Lower leg skin (tissue), 4 donors: ENCODE measurements at regions of chr3 and their contacts with region 1.

Region 1: GRCh38 chr3:125410922-125411321 is 35.8 kb upstream of the ZNF148 start:
- DNase-seq: no peak
- H3K4me3 ChIP-seq: no peak overlapping the region
- CTCF ChIP-seq: no peak
- POLR2A ChIP-seq: no peak

Region 2: GRCh38 chr3:124401843-124402242 is 1009.1 kb before region 1 on chr3:
- intact Hi-C with region 1: loop called (anchors 5 kb)
- DNase-seq: no peak
- H3K4me3 ChIP-seq: no peak overlapping the region
- CTCF ChIP-seq: no peak
- POLR2A ChIP-seq: no peak